Activated CD4-positive, alpha-beta memory T cell treated with anti-CD3 and anti-CD28 coated beads, Interleukin-2, amount 10 ng/mL, durations not matched to agents 7 days and 5 days (primary cell): ENCODE measurements at regions of chr19 and their contacts with region 1.

Region 1: DNA sequence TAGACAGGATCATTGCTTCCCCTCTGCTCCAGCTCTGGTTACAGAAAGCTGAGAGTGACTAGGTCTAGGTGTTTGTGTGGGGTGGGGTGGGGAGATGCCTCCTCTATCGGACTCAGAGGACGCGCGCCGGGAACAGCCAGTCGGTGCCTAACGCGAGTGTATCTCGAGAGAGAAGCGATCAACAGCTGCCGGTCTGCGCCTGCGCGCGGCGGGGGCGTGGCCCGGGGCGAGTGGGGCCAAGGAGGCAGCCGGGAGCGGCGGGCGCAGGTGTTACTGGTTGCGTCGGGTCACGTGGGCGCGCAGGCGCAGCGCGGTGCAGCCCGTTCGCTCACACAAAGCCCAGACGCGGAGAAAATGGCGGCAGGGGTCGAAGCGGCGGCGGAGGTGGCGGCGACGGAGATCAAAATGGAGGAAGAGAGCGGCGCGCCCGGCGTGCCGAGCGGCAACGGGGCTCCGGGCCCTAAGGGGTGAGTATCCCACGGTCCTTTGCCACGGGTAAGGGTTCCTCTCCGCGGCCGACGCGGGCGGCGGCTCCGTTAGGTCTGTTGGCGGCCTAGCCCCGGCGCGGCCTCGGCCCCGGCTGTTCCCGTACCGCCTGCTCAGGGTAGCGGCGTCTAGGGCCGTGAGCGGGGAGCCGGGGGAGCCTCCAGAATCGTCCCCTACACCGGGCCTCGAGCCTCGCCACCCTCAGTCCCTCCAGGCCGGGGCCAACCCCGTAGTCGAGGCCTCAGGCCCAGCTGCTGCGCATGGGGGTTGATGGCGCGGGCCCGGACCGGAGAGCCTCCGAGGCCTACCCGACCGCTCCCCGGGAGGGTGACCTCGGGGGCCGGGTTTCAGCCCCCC is at the start of gene HNRNPM:
- DNase-seq: peak; percentile 100
- H3K4me3 Mint-ChIP-seq: peak within 1 kb of the TSS; percentile 90
- H3K27ac Mint-ChIP-seq: peak within 1 kb of the TSS; percentile 96
- H3K4me1 Mint-ChIP-seq: peaks cover 39% of the 10 kb centered on the region
- H3K27me3 Mint-ChIP-seq: no peaks in the 10 kb centered on the region
- total RNA-seq, gene HNRNPM: 205 to 211 TPM

Region 2: GRCh38 chr19:8389891-8390616 is 54.8 kb before region 1 on chr19 and contains the start of gene RAB11B:
- CTCF ChIA-PET with region 1: no interaction called
- POLR2A ChIA-PET with region 1: interaction called, 12 read pairs
- DNase-seq: peak; percentile 100
- H3K4me3 Mint-ChIP-seq: peak within 1 kb of the TSS; percentile 93
- H3K27ac Mint-ChIP-seq: peak within 1 kb of the TSS; percentile 98
- H3K4me1 Mint-ChIP-seq: peaks cover 34% of the 10 kb centered on the region
- H3K27me3 Mint-ChIP-seq: no peaks in the 10 kb centered on the region
- total RNA-seq, gene RAB11B: 90.9 to 93.7 TPM

Region 3: DNA sequence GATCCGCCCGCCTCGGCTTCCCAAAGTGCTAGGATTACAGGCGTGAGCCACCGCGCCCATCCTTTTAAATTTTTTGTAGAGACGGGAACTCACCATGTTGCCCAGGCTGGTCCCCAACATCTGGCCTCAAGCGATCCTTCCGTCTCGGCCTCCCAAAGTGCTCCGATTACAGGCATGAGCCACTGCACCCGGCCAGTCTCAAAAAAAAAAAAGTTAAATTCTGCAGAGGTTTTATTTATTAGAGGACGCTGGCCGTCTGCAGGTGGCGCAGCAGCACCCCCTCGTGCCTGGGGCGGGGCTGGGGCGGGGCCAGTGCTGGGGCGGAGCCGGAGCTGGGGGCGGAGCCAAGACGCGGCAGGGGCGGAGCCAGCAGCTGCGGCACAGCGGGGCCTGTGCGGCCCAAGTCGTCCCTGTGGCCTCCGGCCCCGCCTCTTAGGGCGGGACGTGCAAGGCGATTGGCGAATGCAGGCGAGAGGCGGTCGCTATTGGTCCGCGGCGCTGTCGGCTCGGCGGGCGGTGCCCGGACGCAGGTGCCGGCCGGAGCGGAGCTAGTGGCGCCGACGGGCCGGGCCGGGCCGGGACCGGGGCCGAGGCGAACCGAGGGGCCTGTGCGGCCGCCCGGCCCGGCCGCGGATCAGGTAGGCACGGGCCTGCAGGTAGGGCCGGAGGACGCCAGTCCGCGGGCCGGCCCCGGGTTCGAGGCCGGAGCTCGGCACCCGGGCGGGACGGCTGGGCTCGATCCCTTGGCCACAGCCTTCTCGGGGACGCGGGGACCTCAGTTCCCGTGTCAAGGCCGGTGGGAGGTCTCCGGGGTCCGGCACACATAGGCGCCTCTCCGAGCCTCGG is 31.9 kb before region 1 on chr19 and contains the start of gene MARCHF2:
- CTCF ChIA-PET with region 1: interaction called, 18 read pairs
- POLR2A ChIA-PET with region 1: interaction called, 50 read pairs
- DNase-seq: peak; percentile 98
- H3K4me3 Mint-ChIP-seq: peak within 1 kb of the TSS; percentile 58
- H3K27ac Mint-ChIP-seq: no peak within 1 kb of the TSS
- H3K4me1 Mint-ChIP-seq: peaks cover 10% of the 10 kb centered on the region
- H3K27me3 Mint-ChIP-seq: no peaks in the 10 kb centered on the region
- total RNA-seq, gene MARCHF2: 20.6 to 20.8 TPM

Region 4: GRCh38 chr19:8460516-8461298 is 15.8 kb after region 1 on chr19:
- CTCF ChIA-PET with region 1: interaction called, 3 read pairs
- POLR2A ChIA-PET with region 1: interaction called, 11 read pairs
- DNase-seq: no peak
- H3K4me3 Mint-ChIP-seq: no peak overlapping the region
- H3K27ac Mint-ChIP-seq: peak overlapping the region; percentile 71
- H3K4me1 Mint-ChIP-seq: peaks cover 58% of the 10 kb centered on the region
- H3K27me3 Mint-ChIP-seq: no peaks in the 10 kb centered on the region

Region 5: DNA sequence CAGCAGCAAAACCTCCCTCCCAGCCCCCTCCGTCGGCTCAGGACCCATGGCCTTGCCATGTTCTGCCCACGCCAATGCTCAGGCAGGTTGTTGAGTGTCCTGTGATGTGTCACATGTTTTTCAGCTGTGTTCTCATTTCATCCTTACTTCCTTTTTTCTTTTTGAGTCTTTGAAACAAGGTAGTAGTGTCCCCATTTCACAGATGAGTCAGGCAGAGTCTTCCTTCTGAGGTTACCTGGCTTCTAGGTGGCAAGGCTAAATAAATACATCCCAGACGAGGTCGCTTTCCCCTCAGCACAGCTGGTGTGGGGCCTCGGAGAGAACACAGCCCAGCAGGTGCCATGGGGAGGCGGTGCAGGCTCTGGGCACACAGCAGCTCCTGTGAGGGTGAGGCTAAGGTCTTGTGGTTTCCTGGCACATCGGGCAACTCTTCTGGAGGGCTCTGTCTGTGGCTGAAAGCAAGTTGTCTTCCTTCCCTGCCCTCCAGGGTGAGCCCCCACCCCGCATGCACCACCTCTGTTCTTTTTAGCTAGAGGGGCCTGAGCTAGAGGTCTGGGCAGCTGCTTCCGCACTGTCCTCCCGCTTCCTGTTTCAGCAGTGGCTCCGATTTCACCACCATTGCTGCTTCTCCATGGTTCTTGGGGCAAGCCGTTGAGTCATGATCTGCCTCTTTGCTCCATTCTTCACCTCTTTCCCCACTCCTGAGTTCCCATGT is 42.4 kb after region 1 on chr19:
- CTCF ChIA-PET with region 1: interaction called, 3 read pairs
- POLR2A ChIA-PET with region 1: interaction called, 13 read pairs
- DNase-seq: peak; percentile 69
- H3K4me3 Mint-ChIP-seq: no peak overlapping the region
- H3K27ac Mint-ChIP-seq: peak overlapping the region; percentile 86
- H3K4me1 Mint-ChIP-seq: peaks cover 31% of the 10 kb centered on the region
- H3K27me3 Mint-ChIP-seq: no peaks in the 10 kb centered on the region

Region 6: DNA sequence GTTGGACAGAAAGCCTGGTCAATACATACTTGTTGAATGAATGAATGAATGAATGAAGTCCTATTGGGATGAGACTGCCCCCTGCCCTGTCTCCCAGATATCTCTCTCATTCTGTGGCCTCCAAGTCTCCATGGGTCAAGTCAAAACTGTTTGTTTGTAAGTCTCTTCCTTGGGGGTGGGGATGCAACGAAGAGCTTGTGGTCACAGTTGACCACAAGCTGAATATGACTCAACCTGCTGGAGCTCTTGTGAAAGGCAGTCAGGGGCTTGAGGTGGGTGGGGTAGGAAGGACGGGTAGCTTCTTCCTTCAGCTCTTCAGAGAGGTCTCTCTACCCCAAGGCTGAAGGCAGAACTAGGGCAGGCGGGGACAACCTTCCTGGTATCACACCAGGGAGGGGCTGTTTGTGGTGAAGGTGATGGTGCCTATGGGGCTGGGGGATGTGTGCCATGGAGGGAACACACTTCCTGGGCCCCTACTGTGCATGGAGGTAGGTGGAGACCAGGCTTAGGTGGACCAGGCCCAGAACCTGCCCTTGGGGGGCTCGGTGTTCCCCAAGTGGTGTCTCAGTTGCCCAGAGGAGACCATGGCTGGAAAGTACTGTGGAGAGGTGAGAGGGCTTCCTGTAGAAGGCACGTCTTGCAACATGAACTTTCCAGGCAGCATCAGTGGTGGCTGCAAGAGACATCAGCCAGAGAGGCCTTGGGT is 124.4 kb after region 1 on chr19:
- CTCF ChIA-PET with region 1: interaction called, 3 read pairs
- POLR2A ChIA-PET with region 1: interaction called, 11 read pairs
- DNase-seq: peak; percentile 88
- H3K4me3 Mint-ChIP-seq: peak overlapping the region; percentile 69
- H3K27ac Mint-ChIP-seq: peak overlapping the region; percentile 96
- H3K4me1 Mint-ChIP-seq: peaks cover 85% of the 10 kb centered on the region
- H3K27me3 Mint-ChIP-seq: no peaks in the 10 kb centered on the region